ENCODE measurements at regions of chr6 and their contacts with region 1.

Region 1: DNA sequence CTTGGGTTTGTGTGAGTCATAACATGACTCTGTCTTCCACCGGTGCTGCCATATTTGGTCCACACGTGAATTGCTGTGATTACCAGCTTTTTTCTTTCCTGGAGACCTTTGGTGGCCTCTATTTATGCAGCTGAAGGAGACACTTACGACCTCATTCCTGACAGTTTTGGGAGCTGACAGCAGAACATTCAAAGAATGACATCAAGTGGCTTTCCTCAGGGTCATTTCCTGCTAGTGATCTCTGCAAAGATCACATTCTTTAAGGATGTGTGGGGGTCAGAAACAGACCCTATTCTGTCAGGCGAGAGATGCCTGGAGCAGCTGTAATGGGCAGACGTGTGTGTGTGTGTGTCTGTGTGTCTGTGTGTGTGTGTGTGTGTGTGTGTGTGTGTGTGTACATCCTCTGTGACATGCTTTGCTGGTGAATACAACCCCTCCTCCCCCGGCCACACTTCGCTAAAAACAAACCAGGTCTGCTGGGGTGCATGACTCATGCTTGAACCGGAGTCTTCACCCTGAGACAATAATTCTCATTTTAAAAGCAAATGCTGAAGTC is 115.6 kb downstream of the TMEM170B start:
- DNase-seq: peak in 2 of 3 donors; percentile 7 to 55
- H3K4me3 ChIP-seq: no peak overlapping the region
- H3K4me3 Mint-ChIP-seq: no peak overlapping the region
- H3K27ac ChIP-seq: no peak overlapping the region
- H3K27ac Mint-ChIP-seq: no peak overlapping the region
- H3K4me1 ChIP-seq: no peaks in the 10 kb centered on the region
- H3K4me1 Mint-ChIP-seq: peaks cover 7% of the 10 kb centered on the region
- H3K27me3 ChIP-seq: no peaks in the 10 kb centered on the region
- H3K27me3 Mint-ChIP-seq: peaks cover 5 to 14% (median 7%) of the 10 kb centered on the region in 3 donors
- CTCF ChIP-seq: no peak

Region 2: DNA sequence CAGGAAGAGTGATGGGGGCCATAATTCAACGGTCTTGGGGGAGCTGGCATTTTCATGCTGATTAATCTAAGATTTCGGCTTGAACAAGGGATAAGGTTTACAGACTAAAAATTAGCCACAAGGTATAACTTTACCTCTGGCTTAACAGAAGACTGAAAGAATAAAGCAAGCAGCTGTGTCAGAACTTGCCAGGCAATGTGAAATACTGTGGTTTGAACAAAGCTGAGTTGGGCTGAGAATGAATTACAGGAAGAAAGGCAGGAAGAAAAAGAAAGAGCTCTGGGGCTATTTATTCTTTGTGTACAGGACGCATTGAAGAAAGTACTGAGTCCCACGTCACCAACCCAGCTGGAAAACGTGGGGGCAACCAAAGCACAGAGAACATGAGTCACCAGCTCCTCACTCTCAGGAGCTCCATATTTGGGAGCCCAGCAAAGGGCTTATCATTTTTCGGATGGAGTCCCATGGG is 299.2 kb before region 1 on chr6:
- intact Hi-C with region 1: no loop called
- DNase-seq: peak; percentile 38 to 79 (median 62)
- H3K4me3 ChIP-seq: no peak overlapping the region
- H3K4me3 Mint-ChIP-seq: no peak overlapping the region
- H3K27ac ChIP-seq: peak overlapping the region; percentile 4 to 11
- H3K27ac Mint-ChIP-seq: peak overlapping the region; percentile 71 to 92 (median 88)
- H3K4me1 ChIP-seq: peaks cover 70 to 93% of the 10 kb centered on the region in 2 donors
- H3K4me1 Mint-ChIP-seq: peaks cover 89% of the 10 kb centered on the region
- H3K27me3 ChIP-seq: no peaks in the 10 kb centered on the region
- H3K27me3 Mint-ChIP-seq: peaks cover 0 to 1% (median 0%) of the 10 kb centered on the region in 3 donors
- CTCF ChIP-seq: no peak

Region 3: GRCh38 chr6:12147557-12148316 is 494.6 kb after region 1 on chr6:
- intact Hi-C with region 1: no loop called
- DNase-seq: no peak
- H3K4me3 ChIP-seq: no peak overlapping the region
- H3K4me3 Mint-ChIP-seq: no peak overlapping the region
- H3K27ac ChIP-seq: no peak overlapping the region
- H3K27ac Mint-ChIP-seq: no peak overlapping the region
- H3K4me1 ChIP-seq: no peaks in the 10 kb centered on the region
- H3K4me1 Mint-ChIP-seq: no peaks in the 10 kb centered on the region
- H3K27me3 ChIP-seq: no peaks in the 10 kb centered on the region
- H3K27me3 Mint-ChIP-seq: peaks cover 0 to 1% (median 0%) of the 10 kb centered on the region in 3 donors
- CTCF ChIP-seq: no peak

Region 4: GRCh38 chr6:12605888-12606345 is 952.8 kb after region 1 on chr6:
- intact Hi-C with region 1: loop called (anchors 10 kb)
- DNase-seq: peak; percentile 53 to 73 (median 73)
- H3K4me3 ChIP-seq: peak overlapping the region in 1 of 3 experiments; percentile 55
- H3K4me3 Mint-ChIP-seq: peak overlapping the region; percentile 52 to 75
- H3K27ac ChIP-seq: no peak overlapping the region
- H3K27ac Mint-ChIP-seq: peak overlapping the region in 1 of 7 donors; percentile 32
- H3K4me1 ChIP-seq: peaks cover 14 to 25% of the 10 kb centered on the region in 2 donors
- H3K4me1 Mint-ChIP-seq: peaks cover 32% of the 10 kb centered on the region
- H3K27me3 ChIP-seq: no peaks in the 10 kb centered on the region
- H3K27me3 Mint-ChIP-seq: no peaks in the 10 kb centered on the region
- CTCF ChIP-seq: peak; percentile 79

Region 5: GRCh38 chr6:12890171-12890790 is 1237.2 kb after region 1 on chr6:
- intact Hi-C with region 1: loop called in 1 of 2 experiments (anchors 10 kb)
- DNase-seq: no peak
- H3K4me3 ChIP-seq: no peak overlapping the region
- H3K4me3 Mint-ChIP-seq: no peak overlapping the region
- H3K27ac ChIP-seq: no peak overlapping the region
- H3K27ac Mint-ChIP-seq: no peak overlapping the region
- H3K4me1 ChIP-seq: peaks cover 0 to 2% of the 10 kb centered on the region in 2 donors
- H3K4me1 Mint-ChIP-seq: peaks cover 3% of the 10 kb centered on the region
- H3K27me3 ChIP-seq: no peaks in the 10 kb centered on the region
- H3K27me3 Mint-ChIP-seq: no peaks in the 10 kb centered on the region
- CTCF ChIP-seq: peak; percentile 58